RWPE1 (cell line): ENCODE measurements at regions of chr7 and their contacts with region 1.

Region 1: GRCh38 chr7:134514663-134515062 is 12.7 kb upstream of the AKR1B10 start:
- DNase-seq: peak; percentile 52
- H3K27ac ChIP-seq: no peak overlapping the region
- CTCF ChIP-seq: peak; percentile 91

Region 2: DNA sequence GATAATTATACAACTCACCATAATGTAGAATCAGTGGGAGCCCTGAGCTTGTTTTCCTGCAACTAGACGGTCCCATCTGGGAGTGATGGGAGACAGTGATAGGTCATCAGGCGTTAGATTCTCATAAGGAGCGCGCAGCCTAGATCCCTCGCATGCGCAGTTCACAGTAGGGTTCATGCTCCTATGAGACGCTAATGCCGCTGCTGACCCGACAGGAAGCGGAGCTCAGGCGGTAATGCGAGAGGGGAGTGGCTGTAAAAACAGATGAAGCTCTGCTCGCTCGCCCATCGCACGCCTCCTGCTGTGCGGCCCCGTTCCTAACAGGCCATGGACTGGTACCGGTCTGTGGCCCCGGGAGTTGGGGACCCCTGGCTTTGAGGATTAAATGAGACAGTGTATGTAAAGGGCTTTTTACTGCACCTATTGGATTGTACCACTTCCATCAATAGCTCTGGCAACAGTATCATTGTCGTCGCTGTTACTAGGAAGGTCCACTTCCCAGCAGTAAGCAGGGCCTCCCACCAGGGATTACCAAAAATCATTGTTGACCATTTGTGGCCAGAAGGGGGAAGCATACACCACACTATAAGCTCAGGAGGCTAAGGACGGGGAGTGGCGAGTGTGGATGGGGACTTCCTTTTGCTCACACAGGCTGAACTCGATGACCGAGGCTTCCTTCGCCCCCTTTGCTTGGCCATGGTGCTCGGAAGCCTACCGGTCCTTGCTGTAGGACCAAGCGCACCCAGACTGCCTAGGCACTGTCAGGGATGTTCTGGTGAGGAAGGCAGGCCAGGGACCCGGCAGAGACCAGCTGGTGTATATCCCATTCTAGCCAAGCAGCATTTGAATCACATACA is 82.1 kb before region 1 on chr7:
- CTCF ChIA-PET with region 1: interaction called, 18 read pairs
- POLR2A ChIA-PET with region 1: no interaction called
- DNase-seq: peak; percentile 89
- H3K27ac ChIP-seq: peak overlapping the region; percentile 79
- CTCF ChIP-seq: peak; percentile 83

Region 3: DNA sequence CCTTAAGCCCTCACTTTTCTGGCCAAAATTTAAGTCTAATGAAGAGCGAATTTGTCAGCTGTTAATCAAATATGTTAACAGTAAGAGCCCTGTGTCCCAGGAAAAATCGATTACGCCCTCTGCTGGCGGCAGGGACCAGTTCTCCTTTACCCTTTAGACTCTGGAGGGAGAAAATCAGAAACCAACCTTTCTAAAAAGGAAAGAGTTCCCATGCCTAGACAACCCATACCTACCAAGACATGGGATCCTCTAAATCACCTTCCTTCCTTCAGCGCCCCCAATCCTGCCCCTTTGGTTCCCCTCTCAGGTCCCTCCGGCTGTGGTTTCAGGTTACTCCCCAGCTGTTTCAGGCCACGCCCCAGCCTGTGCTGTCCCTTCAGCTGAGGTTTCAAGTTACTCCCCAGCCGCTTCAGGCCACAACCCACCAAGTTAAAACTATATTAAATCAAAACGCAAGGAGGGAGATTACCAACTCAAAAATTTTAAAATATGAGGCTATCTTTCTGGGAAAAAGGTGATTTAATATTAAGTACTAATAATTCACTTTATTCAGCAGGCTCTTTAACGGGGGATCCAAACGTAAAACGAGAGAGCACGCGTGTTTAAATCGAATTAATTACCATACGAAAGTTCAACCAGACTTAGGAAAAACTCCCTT is 32.9 kb after region 1 on chr7:
- CTCF ChIA-PET with region 1: interaction called, 13 read pairs
- POLR2A ChIA-PET with region 1: no interaction called
- DNase-seq: peak; percentile 77
- H3K27ac ChIP-seq: peak overlapping the region; percentile 52; the same call in 1 of the 2 replicates
- CTCF ChIP-seq: peak; percentile 94